MCF 10A (cell line): ENCODE measurements at regions of chr13 and their contacts with region 1.

Region 1: DNA sequence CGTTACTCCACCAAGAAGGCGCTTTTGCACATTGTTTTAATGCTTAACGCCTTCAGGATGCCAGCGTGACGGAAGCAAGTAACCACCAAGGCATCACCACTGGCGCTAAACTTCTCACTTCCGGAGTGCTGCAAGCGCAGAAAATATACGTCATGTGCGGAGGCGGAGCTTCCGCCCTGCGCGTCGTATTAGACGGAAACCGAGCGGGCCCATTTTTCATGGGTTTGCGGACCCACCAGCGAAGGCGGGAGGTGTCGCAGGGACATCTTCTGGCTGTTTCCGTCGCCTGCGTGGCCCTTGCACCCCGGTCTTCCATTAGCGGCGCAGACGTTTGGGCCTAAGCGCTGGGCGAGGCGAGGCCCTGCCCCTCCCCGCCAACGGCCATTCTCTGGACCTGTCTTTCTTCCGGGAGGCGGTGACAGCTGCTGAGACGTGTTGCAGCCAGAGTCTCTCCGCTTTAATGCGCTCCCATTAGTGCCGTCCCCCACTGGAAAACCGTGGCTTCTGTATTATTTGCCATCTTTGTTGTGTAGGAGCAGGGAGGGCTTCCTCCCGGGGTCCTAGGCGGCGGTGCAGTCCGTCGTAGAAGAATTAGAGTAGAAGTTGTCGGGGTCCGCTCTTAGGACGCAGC is at the start of gene ERCC5:
- DNase-seq: peak; percentile 96
- H3K4me3 Mint-ChIP-seq: peak within 1 kb of the TSS; percentile 83
- H3K27ac Mint-ChIP-seq: peak within 1 kb of the TSS; percentile 90
- H3K4me1 Mint-ChIP-seq: peaks cover 20% of the 10 kb centered on the region
- H3K27me3 Mint-ChIP-seq: no peaks in the 10 kb centered on the region
- CTCF ChIP-seq: no peak
- total RNA-seq, gene ERCC5: 68.1 and 68.8 TPM in 2 replicates

Region 2: GRCh38 chr13:102580552-102581169 is 265.1 kb before region 1 on chr13:
- CTCF ChIA-PET with region 1: interaction called, 25 read pairs
- POLR2A ChIA-PET with region 1: interaction called, 7 read pairs
- intact Hi-C with region 1: loop called (anchors 1 kb)
- DNase-seq: peak; percentile 74
- H3K4me3 Mint-ChIP-seq: no peak overlapping the region
- H3K27ac Mint-ChIP-seq: no peak overlapping the region
- H3K4me1 Mint-ChIP-seq: peaks cover 5% of the 10 kb centered on the region
- H3K27me3 Mint-ChIP-seq: peaks cover 13% of the 10 kb centered on the region
- CTCF ChIP-seq: peak; percentile 67

Region 3: GRCh38 chr13:102773441-102774215 is 72.1 kb before region 1 on chr13 and contains the start of gene TEX30:
- CTCF ChIA-PET with region 1: interaction called, 5 read pairs
- POLR2A ChIA-PET with region 1: interaction called, 44 read pairs
- intact Hi-C with region 1: loop called (anchors 2 kb)
- DNase-seq: peak; percentile 79
- H3K4me3 Mint-ChIP-seq: peak within 1 kb of the TSS; percentile 80
- H3K27ac Mint-ChIP-seq: peak within 1 kb of the TSS; percentile 87
- H3K4me1 Mint-ChIP-seq: peaks cover 18% of the 10 kb centered on the region
- H3K27me3 Mint-ChIP-seq: no peaks in the 10 kb centered on the region
- CTCF ChIP-seq: no peak
- total RNA-seq, gene TEX30: 10.7 and 14.2 TPM in 2 replicates

Region 4: GRCh38 chr13:102800145-102801041 is 45.4 kb before region 1 on chr13:
- CTCF ChIA-PET with region 1: interaction called, 4 read pairs
- POLR2A ChIA-PET with region 1: interaction called, 79 read pairs
- intact Hi-C with region 1: loop called (anchors 1 kb)
- DNase-seq: peak; percentile 83
- H3K4me3 Mint-ChIP-seq: peak overlapping the region; percentile 92
- H3K27ac Mint-ChIP-seq: peak overlapping the region; percentile 63
- H3K4me1 Mint-ChIP-seq: peaks cover 21% of the 10 kb centered on the region
- H3K27me3 Mint-ChIP-seq: no peaks in the 10 kb centered on the region
- CTCF ChIP-seq: peak; percentile 83

Region 5: DNA sequence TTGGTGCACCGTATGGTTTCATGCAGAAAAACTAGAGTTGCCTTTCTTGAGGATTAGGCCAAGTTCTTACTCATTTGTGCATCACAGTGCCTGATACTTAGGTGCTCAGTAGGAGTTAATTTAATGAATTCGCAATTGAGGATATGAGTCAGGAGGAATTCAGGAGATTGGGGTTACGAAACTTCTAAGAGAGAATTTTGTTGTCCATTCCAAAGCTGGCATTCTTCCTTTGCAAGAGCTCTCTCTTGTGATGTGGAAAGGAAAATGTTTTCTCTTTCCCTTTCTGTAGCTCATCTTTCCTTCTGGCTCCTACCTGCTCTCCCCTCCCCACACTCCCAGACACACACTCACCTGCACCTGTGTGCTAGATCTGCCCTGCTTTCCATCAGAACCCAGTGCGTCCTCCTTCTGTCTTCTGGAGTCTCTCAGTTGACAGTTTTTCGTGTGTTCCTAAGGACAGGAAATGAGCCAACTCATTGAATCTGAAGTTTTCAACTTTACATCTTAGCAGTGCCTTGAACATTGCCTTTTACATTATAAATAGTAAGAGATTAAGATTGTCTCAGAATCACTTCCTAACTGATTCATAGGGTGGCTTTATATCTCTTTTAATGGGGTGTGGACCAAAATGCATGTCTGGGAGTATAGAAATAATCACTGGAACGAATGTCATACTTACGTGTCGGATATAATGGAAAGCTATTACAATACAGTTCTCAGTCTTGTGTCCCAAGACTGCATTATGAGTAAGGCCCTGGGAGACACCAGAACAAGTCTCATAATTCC is 19.6 kb before region 1 on chr13:
- CTCF ChIA-PET with region 1: interaction called, 5 read pairs
- POLR2A ChIA-PET with region 1: interaction called, 47 read pairs
- intact Hi-C with region 1: no loop called
- DNase-seq: peak; percentile 91
- H3K4me3 Mint-ChIP-seq: peak overlapping the region; percentile 72
- H3K27ac Mint-ChIP-seq: peak overlapping the region; percentile 82
- H3K4me1 Mint-ChIP-seq: peaks cover 24% of the 10 kb centered on the region
- H3K27me3 Mint-ChIP-seq: no peaks in the 10 kb centered on the region
- CTCF ChIP-seq: peak; percentile 9

Region 6: DNA sequence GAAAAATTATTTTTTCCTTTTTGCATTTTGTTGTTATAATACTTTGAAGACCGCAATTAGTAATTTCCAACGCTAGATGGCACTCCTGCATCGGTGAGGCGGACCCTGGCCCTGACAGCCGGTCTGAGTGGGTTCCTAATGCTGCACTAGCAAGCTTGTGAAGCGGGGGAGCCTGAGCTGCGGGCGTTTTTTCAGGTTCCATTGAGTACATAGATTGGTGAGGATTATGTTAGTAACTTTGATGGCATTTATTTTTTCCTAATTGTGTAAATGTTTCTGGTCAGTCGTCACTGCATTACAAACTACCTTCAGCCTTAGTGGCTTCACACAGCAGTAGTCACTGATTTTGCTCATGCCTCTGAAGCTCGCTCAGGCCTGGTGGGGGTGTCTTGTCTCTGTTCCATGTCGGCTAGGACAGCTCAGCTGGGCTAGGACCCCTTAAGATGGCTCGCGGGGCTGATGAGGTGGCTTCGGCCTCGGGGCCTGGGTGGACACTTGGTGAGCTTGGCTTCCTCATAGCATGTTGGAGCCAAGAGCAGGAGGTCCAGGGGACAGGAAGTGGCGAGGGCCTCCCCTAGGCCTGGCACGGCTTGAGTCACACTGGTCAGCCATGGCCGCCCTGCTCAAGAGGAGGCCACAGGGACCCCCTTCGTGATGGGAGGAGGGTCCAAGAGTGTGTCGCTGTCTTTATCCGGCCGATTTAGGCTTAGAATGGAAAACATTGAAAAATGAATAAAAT is 25.1 kb after region 1 on chr13:
- CTCF ChIA-PET with region 1: interaction called, 10 read pairs
- POLR2A ChIA-PET with region 1: interaction called, 6 read pairs
- intact Hi-C with region 1: no loop called
- DNase-seq: peak; percentile 54
- H3K4me3 Mint-ChIP-seq: no peak overlapping the region
- H3K27ac Mint-ChIP-seq: no peak overlapping the region
- H3K4me1 Mint-ChIP-seq: peaks cover 5% of the 10 kb centered on the region
- H3K27me3 Mint-ChIP-seq: no peaks in the 10 kb centered on the region
- CTCF ChIP-seq: peak; percentile 75